ENCODE measurements at regions of chr5 and their contacts with region 1.

Region 1: GRCh38 chr5:59810041-59810440 is 83.5 kb downstream of the PDE4D start:
- DNase-seq: peak; percentile 63
- ATAC-seq: peak; percentile 76
- H3K4me3 Mint-ChIP-seq: no peak overlapping the region
- H3K27ac Mint-ChIP-seq: no peak overlapping the region
- H3K4me1 Mint-ChIP-seq: peaks cover 3% of the 10 kb centered on the region
- H3K27me3 Mint-ChIP-seq: peaks cover 6% of the 10 kb centered on the region

Region 2: GRCh38 chr5:59790399-59791125 is 19.5 kb before region 1 on chr5:
- CTCF ChIA-PET with region 1: interaction called, 21 read pairs
- POLR2A ChIA-PET with region 1: no interaction called
- DNase-seq: no peak
- ATAC-seq: no peak
- H3K4me3 Mint-ChIP-seq: peak overlapping the region; percentile 2
- H3K27ac Mint-ChIP-seq: peak overlapping the region; percentile 3
- H3K4me1 Mint-ChIP-seq: peaks cover 10% of the 10 kb centered on the region
- H3K27me3 Mint-ChIP-seq: peaks cover 5% of the 10 kb centered on the region

Region 3: GRCh38 chr5:60668686-60669304 is 858.8 kb after region 1 on chr5:
- CTCF ChIA-PET with region 1: interaction called, 13 read pairs
- POLR2A ChIA-PET with region 1: no interaction called
- DNase-seq: no peak
- ATAC-seq: no peak
- H3K4me3 Mint-ChIP-seq: no peak overlapping the region
- H3K27ac Mint-ChIP-seq: no peak overlapping the region
- H3K4me1 Mint-ChIP-seq: no peaks in the 10 kb centered on the region
- H3K27me3 Mint-ChIP-seq: no peaks in the 10 kb centered on the region